Astrocyte of the cerebellum (primary cell): ENCODE measurements at regions of chr16 and their contacts with region 1.

Region 1: DNA sequence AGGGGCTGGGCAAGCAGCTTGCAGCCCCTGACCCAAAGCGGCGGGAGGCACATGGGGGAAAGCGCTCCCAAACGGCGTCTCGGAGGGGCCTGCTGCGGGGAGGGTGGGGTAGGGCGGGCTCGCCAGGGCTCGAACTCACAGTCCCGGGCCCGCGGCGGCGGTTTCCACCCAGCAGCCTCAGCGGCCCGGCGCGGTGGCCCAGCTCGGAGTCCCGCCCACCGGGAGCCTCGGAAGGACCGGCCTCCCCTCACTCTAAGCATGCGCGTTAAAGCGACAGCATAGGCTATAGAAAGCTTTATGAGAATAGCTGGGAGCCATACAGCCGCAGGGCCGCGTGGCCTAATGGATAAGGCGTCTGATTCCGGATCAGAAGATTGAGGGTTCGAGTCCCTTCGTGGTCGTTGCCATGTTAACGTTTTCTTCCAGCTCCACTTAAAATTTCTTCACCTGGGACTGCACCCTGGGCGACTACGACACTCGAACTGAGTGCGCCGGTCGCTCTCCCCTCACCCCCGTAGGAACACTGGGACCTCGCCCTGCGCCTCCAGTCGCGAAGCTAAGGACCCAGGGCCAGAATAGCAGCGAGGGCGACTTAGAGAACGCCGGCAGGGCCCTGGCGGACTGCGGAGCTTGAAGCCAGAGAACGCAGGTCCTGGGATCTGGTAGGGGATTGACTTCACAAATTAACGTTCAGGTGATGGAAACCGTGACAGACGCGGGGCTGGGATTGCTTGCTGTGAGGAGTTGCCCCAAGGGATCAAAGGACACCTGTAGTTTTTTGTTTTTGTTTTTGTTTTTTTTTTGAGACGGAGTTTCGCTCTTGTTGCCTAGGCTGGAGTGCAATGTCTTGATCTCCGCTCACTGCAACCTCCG is 15.8 kb downstream of the ZNF213 start:
- DNase-seq: peak; percentile 88
- H3K4me3 ChIP-seq: peak overlapping the region; percentile 67
- CTCF ChIP-seq: no peak

Region 2: DNA sequence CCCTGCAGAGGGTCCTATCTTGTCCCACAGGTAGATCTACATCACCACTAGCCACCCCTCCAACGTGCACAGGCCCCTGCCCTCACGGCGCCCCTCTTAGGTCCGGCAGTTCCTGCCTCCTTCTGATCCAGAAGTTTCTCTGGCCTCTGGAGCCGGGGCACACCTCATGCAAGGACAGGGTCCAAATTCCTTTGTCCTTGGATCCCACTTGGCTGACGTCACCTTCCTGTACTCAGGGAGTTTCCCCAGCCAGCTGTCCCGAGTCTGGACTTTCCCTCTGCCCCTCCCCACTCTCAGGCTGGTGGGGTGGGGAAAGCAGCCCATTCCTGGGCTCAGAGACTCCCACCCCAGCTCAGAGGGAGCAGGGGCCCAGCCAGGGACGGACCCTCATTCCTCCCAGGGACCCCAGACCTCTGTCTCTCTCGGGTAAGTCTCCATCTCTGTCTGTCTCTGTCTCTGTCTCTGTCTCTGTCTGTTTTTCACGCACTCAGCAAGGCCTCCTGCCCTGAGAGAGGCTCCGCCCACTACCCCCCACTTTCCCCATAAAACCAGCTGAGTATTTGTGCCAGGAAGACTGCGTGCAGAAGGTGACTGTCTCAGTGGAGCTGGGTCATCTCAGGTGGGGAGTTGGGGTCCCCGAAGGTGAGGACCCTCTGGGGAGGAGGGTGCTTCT is 85.4 kb before region 1 on chr16 and contains the start of gene IL32:
- in situ Hi-C with region 1: loop called (anchors 5 kb)
- DNase-seq: peak; percentile 34
- H3K4me3 ChIP-seq: no peak within 1 kb of the TSS
- CTCF ChIP-seq: no peak

Region 3: DNA sequence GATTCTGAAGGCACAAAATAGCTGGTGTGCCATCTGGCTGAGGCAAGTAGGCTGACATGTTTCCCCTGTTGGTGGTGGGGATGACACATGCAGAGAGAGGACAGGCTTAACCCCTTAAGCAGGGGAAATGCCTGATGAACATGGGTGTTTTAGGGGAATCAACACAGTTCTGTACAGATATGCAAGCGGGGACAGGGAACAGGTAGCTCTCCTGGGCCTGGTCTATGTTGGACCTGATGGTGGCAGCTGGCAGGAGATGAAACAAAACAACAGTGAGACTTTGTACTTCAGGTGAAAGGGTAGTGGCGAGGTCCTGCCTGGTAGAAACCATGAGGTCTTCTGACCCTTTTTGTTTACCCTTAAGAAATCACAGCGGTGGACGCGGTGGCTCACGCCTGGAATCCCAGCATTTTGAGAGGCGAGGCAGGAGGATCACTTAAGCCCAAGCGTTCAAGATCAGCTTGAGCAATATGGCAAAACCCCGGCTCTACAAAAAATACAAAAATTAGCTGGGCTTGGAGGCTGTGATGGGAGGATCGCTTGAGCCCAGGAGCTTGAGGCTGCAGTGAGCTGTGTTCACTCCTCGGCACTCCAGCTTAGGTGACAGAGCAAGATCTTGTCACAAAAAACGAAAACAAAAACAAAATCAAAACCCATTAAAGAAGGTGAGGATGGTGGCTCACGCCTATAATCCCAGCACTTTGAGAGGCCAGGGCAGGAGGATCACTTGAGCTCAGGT is 47.9 kb after region 1 on chr16:
- in situ Hi-C with region 1: no loop called
- DNase-seq: no peak
- H3K4me3 ChIP-seq: no peak overlapping the region
- CTCF ChIP-seq: no peak